CD4-positive, alpha-beta memory T cell (primary cell): ENCODE measurements at regions of chr6 and their contacts with region 1.

Region 1: GRCh38 chr6:83884523-83884922 is 25.0 kb downstream of the CYB5R4 start:
- DNase-seq: peak in 4 of 5 donors; percentile 28 to 48 (median 46)
- H3K4me3 ChIP-seq: no peak overlapping the region
- H3K4me3 Mint-ChIP-seq: no peak overlapping the region
- H3K27ac ChIP-seq: no peak overlapping the region
- H3K27ac Mint-ChIP-seq: peak overlapping the region in 1 of 7 donors; percentile 35
- H3K4me1 ChIP-seq: peaks cover 7% of the 10 kb centered on the region
- H3K4me1 Mint-ChIP-seq: peaks cover 12 to 26% (median 19%) of the 10 kb centered on the region in 4 donors
- H3K27me3 ChIP-seq: no peaks in the 10 kb centered on the region
- H3K27me3 Mint-ChIP-seq: no peaks in the 10 kb centered on the region

Region 2: GRCh38 chr6:83859410-83860358 is 24.8 kb before region 1 on chr6 and contains the start of gene CYB5R4:
- CTCF ChIA-PET with region 1: interaction called, 5 read pairs
- POLR2A ChIA-PET with region 1: interaction called, 3 read pairs
- intact Hi-C with region 1: loop called (anchors 2 kb)
- DNase-seq: peak; percentile 94 to 95 (median 94)
- H3K4me3 ChIP-seq: peak within 1 kb of the TSS; percentile 87 to 95
- H3K4me3 Mint-ChIP-seq: peak within 1 kb of the TSS; percentile 94 to 99 (median 98)
- H3K27ac ChIP-seq: peak within 1 kb of the TSS; percentile 79
- H3K27ac Mint-ChIP-seq: peak within 1 kb of the TSS; percentile 87 to 97 (median 95)
- H3K4me1 ChIP-seq: peaks cover 22% of the 10 kb centered on the region
- H3K4me1 Mint-ChIP-seq: peaks cover 29 to 46% (median 37%) of the 10 kb centered on the region in 4 donors
- H3K27me3 ChIP-seq: no peaks in the 10 kb centered on the region
- H3K27me3 Mint-ChIP-seq: peaks cover 9% of the 10 kb centered on the region in 2 donors
- total RNA-seq, gene CYB5R4: 24.0 to 26.2 TPM

Region 3: DNA sequence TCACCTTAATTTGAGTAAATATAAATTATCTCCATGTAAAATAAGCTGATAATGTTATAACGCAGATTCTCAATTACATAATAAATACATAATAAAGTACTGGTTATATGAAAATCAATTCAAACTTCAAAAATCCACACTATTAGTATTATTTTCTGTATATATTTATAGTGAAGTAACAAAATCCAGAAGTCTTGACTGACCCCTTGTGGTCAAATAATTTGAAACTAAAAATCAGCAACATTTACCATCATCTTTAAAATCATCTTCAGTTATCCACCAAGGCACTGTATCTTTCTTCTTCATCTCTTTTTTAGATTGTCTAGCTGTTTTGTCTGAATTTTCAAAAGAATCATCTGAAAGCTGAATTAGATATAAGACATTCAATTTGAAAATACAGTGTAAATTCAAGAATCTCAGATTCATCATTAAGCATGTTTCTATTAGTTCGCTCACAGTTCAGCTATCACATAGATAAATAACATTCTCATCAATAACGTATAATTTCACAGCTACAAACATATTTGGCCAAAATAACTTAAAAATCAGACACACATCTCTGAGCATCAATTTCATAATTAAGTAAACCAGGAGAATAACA is 336.4 kb after region 1 on chr6:
- CTCF ChIA-PET with region 1: interaction called, 18 read pairs
- POLR2A ChIA-PET with region 1: no interaction called
- intact Hi-C with region 1: loop called (anchors 1 kb)
- DNase-seq: peak in 4 of 5 donors; percentile 5 to 16 (median 8)
- H3K4me3 ChIP-seq: no peak overlapping the region
- H3K4me3 Mint-ChIP-seq: no peak overlapping the region
- H3K27ac ChIP-seq: no peak overlapping the region
- H3K27ac Mint-ChIP-seq: no peak overlapping the region
- H3K4me1 ChIP-seq: peaks cover 2% of the 10 kb centered on the region
- H3K4me1 Mint-ChIP-seq: peaks cover 4 to 7% (median 4%) of the 10 kb centered on the region in 4 donors
- H3K27me3 ChIP-seq: no peaks in the 10 kb centered on the region
- H3K27me3 Mint-ChIP-seq: no peaks in the 10 kb centered on the region

Region 4: GRCh38 chr6:85323435-85324040 is 1439.0 kb after region 1 on chr6:
- CTCF ChIA-PET with region 1: interaction called, 14 read pairs
- POLR2A ChIA-PET with region 1: no interaction called
- intact Hi-C with region 1: no loop called
- DNase-seq: peak; percentile 40 to 53 (median 47)
- H3K4me3 ChIP-seq: no peak overlapping the region
- H3K4me3 Mint-ChIP-seq: no peak overlapping the region
- H3K27ac ChIP-seq: no peak overlapping the region
- H3K27ac Mint-ChIP-seq: no peak overlapping the region
- H3K4me1 ChIP-seq: no peaks in the 10 kb centered on the region
- H3K4me1 Mint-ChIP-seq: no peaks in the 10 kb centered on the region
- H3K27me3 ChIP-seq: no peaks in the 10 kb centered on the region
- H3K27me3 Mint-ChIP-seq: peaks cover 8 to 11% of the 10 kb centered on the region in 2 donors